ENCODE measurements at regions of chr9 and their contacts with region 1.

Region 1: GRCh38 chr9:97900738-97901565 is 21.3 kb downstream of the TRMO start:
- DNase-seq: peak; percentile 32
- ATAC-seq: no peak
- H3K4me3 Mint-ChIP-seq: no peak overlapping the region
- H3K27ac Mint-ChIP-seq: peak overlapping the region; percentile 66
- H3K4me1 Mint-ChIP-seq: peaks cover 46% of the 10 kb centered on the region
- H3K27me3 Mint-ChIP-seq: no peaks in the 10 kb centered on the region
- CTCF ChIP-seq: peak; percentile 88

Region 2: DNA sequence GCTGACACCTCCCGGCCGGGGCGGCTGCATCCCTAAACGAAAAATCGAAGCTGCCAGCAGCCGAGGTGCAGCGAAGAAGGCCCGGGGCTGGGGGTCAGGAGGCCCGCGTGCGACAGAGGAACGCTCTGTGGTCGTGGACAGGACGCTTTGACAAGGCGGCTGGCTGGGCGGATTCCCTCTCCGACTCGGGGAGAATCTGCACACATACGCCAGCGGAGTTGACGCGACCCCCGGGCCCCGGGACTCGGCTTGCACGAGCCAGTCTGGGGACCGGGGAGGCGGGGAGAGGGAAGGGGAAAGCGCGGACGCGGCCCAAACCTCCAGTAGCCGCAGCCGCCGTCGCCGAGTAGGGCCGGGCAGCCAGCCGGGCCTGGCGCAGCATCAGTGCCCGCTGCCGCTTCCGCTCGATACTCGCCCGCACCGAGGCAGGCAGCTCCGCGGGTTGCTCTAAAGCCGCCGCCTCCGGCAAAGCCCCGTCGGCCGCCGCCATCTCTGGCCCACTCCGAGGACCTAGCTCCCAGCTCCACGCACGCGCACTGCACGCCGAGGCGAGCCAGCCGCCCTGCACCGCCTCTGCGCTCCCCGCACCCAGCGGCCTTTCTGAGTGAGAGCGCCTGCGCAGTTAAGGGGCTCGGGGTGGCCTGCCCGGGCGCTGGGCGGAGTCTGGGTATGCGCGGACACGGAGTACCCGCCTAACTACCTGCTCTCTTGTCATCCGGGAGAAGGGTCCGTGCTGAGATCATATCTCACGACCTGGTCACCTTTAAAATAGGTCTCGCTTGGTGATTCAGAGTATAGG is 203.9 kb before region 1 on chr9 and contains the start of gene XPA:
- CTCF ChIA-PET with region 1: interaction called, 22 read pairs
- POLR2A ChIA-PET with region 1: interaction called, 3 read pairs
- intact Hi-C with region 1: no loop called
- DNase-seq: peak; percentile 97
- ATAC-seq: peak; percentile 98
- H3K4me3 Mint-ChIP-seq: peak within 1 kb of the TSS; percentile 92
- H3K27ac Mint-ChIP-seq: peak within 1 kb of the TSS; percentile 94
- H3K4me1 Mint-ChIP-seq: peaks cover 46% of the 10 kb centered on the region
- H3K27me3 Mint-ChIP-seq: peaks cover 4% of the 10 kb centered on the region
- CTCF ChIP-seq: no peak
- total RNA-seq, gene XPA: 9.8 to 10.9 TPM

Region 3: GRCh38 chr9:97703437-97704344 is 197.3 kb before region 1 on chr9:
- CTCF ChIA-PET with region 1: interaction called, 24 read pairs
- POLR2A ChIA-PET with region 1: no interaction called
- intact Hi-C with region 1: no loop called
- DNase-seq: peak; percentile 65
- ATAC-seq: peak; percentile 85
- H3K4me3 Mint-ChIP-seq: peak overlapping the region; percentile 19
- H3K27ac Mint-ChIP-seq: peak overlapping the region; percentile 91
- H3K4me1 Mint-ChIP-seq: peaks cover 17% of the 10 kb centered on the region
- H3K27me3 Mint-ChIP-seq: peaks cover 4% of the 10 kb centered on the region
- CTCF ChIP-seq: no peak

Region 4: GRCh38 chr9:97710356-97711222 is 190.4 kb before region 1 on chr9:
- CTCF ChIA-PET with region 1: interaction called, 32 read pairs
- POLR2A ChIA-PET with region 1: no interaction called
- intact Hi-C with region 1: loop called (anchors 5 kb)
- DNase-seq: peak; percentile 62
- ATAC-seq: peak; percentile 94
- H3K4me3 Mint-ChIP-seq: no peak overlapping the region
- H3K27ac Mint-ChIP-seq: no peak overlapping the region
- H3K4me1 Mint-ChIP-seq: peaks cover 18% of the 10 kb centered on the region
- H3K27me3 Mint-ChIP-seq: no peaks in the 10 kb centered on the region
- CTCF ChIP-seq: peak; percentile 92

Region 5: GRCh38 chr9:97890038-97890437 is 10.9 kb before region 1 on chr9:
- CTCF ChIA-PET with region 1: interaction called, 169 read pairs
- POLR2A ChIA-PET with region 1: interaction called, 4 read pairs
- intact Hi-C with region 1: no loop called
- DNase-seq: peak; percentile 82
- ATAC-seq: peak; percentile 87
- H3K4me3 Mint-ChIP-seq: no peak overlapping the region
- H3K27ac Mint-ChIP-seq: no peak overlapping the region
- H3K4me1 Mint-ChIP-seq: peaks cover 5% of the 10 kb centered on the region
- H3K27me3 Mint-ChIP-seq: no peaks in the 10 kb centered on the region
- CTCF ChIP-seq: peak; percentile 95

Region 6: GRCh38 chr9:97975376-97975775 is 74.4 kb after region 1 on chr9:
- CTCF ChIA-PET with region 1: no interaction called
- POLR2A ChIA-PET with region 1: no interaction called
- intact Hi-C with region 1: no loop called
- DNase-seq: no peak
- ATAC-seq: no peak
- H3K4me3 Mint-ChIP-seq: no peak overlapping the region
- H3K27ac Mint-ChIP-seq: no peak overlapping the region
- H3K4me1 Mint-ChIP-seq: peaks cover 20% of the 10 kb centered on the region
- H3K27me3 Mint-ChIP-seq: no peaks in the 10 kb centered on the region
- CTCF ChIP-seq: no peak

Region 7: DNA sequence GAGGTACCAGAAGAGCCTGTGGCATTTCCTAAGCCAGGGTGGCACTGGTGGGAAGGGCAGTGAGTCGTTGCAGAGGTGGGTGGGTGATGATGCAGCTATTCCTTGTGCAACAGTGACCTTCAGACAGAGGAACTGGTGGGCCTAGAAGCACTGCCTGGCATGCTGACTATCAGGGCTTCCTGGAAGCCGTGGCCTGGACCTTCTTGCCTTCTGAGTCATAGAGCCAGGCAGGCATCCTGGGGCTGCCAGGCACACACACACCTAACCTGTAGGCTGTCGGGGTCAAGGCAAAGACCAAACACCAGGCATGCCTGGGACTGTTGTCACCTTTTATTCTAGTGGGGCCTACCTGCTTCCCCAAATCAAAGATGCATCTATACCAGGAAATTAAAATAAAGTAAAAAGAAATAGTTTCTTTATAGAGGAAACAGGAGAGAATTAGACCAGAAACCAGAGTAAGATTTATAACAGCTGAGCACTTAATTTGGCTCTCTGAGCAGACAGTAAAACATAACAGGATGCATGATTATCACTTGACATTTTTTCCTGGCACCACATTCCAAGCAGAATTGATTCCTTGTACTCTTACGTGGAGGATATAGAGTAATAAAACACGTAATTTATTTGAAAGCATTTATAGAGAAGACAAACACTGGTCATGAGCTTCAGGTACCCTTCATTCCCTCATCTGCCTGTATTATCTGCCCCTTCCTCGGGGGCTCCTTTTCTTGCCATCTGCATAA is 180.7 kb after region 1 on chr9:
- CTCF ChIA-PET with region 1: no interaction called
- POLR2A ChIA-PET with region 1: no interaction called
- intact Hi-C with region 1: no loop called
- DNase-seq: peak; percentile 82
- ATAC-seq: peak; percentile 96
- H3K4me3 Mint-ChIP-seq: no peak overlapping the region
- H3K27ac Mint-ChIP-seq: peak overlapping the region; percentile 80
- H3K4me1 Mint-ChIP-seq: peaks cover 38% of the 10 kb centered on the region
- H3K27me3 Mint-ChIP-seq: no peaks in the 10 kb centered on the region
- CTCF ChIP-seq: no peak

Measured in activated CD8-positive, alpha-beta T cell treated with anti-CD3 and anti-CD28 coated beads for 36 hours (primary cell).